ENCODE measurements at regions of chr15 and their contacts with region 1.

Region 1: GRCh38 chr15:91356083-91356482 is 256.0 kb downstream of the SV2B start:
- DNase-seq: no peak
- ATAC-seq: no peak
- H3K4me3 ChIP-seq: no peak overlapping the region
- H3K27ac ChIP-seq: no peak overlapping the region
- H3K4me1 ChIP-seq: no peaks in the 10 kb centered on the region
- H3K27me3 ChIP-seq: no peaks in the 10 kb centered on the region; a peak in 3 of 4 replicates
- CTCF ChIP-seq: no peak
- EP300 ChIP-seq: no peak
- POLR2A ChIP-seq: no peak
- RAD21 ChIP-seq: no peak

Region 2: GRCh38 chr15:91369823-91370222 is 13.7 kb after region 1 on chr15:
- CTCF ChIA-PET with region 1: interaction called, 3 read pairs
- POLR2A ChIA-PET with region 1: no interaction called
- RAD21 ChIA-PET with region 1: no interaction called
- SMC1A ChIA-PET with region 1: no interaction called
- in situ Hi-C with region 1: no loop called
- intact Hi-C with region 1: loop called (anchors 1 kb)
- DNase-seq: no peak
- ATAC-seq: no peak
- H3K4me3 ChIP-seq: no peak overlapping the region
- H3K27ac ChIP-seq: no peak overlapping the region
- H3K4me1 ChIP-seq: no peaks in the 10 kb centered on the region
- H3K27me3 ChIP-seq: no peaks in the 10 kb centered on the region
- CTCF ChIP-seq: no peak
- EP300 ChIP-seq: no peak
- POLR2A ChIP-seq: no peak
- RAD21 ChIP-seq: no peak

Region 3: GRCh38 chr15:91393186-91393585 is 37.1 kb after region 1 on chr15:
- CTCF ChIA-PET with region 1: no interaction called
- POLR2A ChIA-PET with region 1: no interaction called
- RAD21 ChIA-PET with region 1: no interaction called
- SMC1A ChIA-PET with region 1: no interaction called
- in situ Hi-C with region 1: no loop called
- intact Hi-C with region 1: no loop called
- DNase-seq: no peak
- ATAC-seq: no peak
- H3K4me3 ChIP-seq: no peak overlapping the region
- H3K27ac ChIP-seq: no peak overlapping the region
- H3K4me1 ChIP-seq: no peaks in the 10 kb centered on the region
- H3K27me3 ChIP-seq: no peaks in the 10 kb centered on the region
- CTCF ChIP-seq: no peak
- EP300 ChIP-seq: no peak
- POLR2A ChIP-seq: no peak
- RAD21 ChIP-seq: no peak

Region 4: GRCh38 chr15:91535856-91536500 is 179.9 kb after region 1 on chr15:
- CTCF ChIA-PET with region 1: no interaction called
- POLR2A ChIA-PET with region 1: no interaction called
- RAD21 ChIA-PET with region 1: no interaction called
- SMC1A ChIA-PET with region 1: no interaction called
- in situ Hi-C with region 1: no loop called
- intact Hi-C with region 1: no loop called
- DNase-seq: no peak
- ATAC-seq: no peak
- H3K4me3 ChIP-seq: no peak overlapping the region
- H3K27ac ChIP-seq: no peak overlapping the region
- H3K4me1 ChIP-seq: no peaks in the 10 kb centered on the region
- H3K27me3 ChIP-seq: no peaks in the 10 kb centered on the region; a peak in 2 of 4 replicates
- CTCF ChIP-seq: no peak
- EP300 ChIP-seq: no peak
- POLR2A ChIP-seq: no peak
- RAD21 ChIP-seq: no peak

Measured in GM12878 (cell line).